ENCODE measurements at regions of chr1 and their contacts with region 1.

Region 1: GRCh38 chr1:167936068-167936929 is at the start of gene DCAF6:
- DNase-seq: peak; percentile 99
- ATAC-seq: peak; percentile 78
- H3K4me3 ChIP-seq: peak within 1 kb of the TSS; percentile 79 to 96 (median 94)
- H3K4me3 Mint-ChIP-seq: peak within 1 kb of the TSS; percentile 95
- H3K27ac ChIP-seq: peak within 1 kb of the TSS; percentile 87 to 95
- H3K27ac Mint-ChIP-seq: peak within 1 kb of the TSS; percentile 100
- H3K4me1 ChIP-seq: peaks cover 10 to 27% of the 10 kb centered on the region in 2 donors
- H3K4me1 Mint-ChIP-seq: peaks cover 35% of the 10 kb centered on the region
- H3K27me3 ChIP-seq: no peaks in the 10 kb centered on the region
- H3K27me3 Mint-ChIP-seq: no peaks in the 10 kb centered on the region
- CTCF ChIP-seq: no peak
- total RNA-seq, gene DCAF6: 40.0 and 40.4 TPM in 2 replicates

Region 2: DNA sequence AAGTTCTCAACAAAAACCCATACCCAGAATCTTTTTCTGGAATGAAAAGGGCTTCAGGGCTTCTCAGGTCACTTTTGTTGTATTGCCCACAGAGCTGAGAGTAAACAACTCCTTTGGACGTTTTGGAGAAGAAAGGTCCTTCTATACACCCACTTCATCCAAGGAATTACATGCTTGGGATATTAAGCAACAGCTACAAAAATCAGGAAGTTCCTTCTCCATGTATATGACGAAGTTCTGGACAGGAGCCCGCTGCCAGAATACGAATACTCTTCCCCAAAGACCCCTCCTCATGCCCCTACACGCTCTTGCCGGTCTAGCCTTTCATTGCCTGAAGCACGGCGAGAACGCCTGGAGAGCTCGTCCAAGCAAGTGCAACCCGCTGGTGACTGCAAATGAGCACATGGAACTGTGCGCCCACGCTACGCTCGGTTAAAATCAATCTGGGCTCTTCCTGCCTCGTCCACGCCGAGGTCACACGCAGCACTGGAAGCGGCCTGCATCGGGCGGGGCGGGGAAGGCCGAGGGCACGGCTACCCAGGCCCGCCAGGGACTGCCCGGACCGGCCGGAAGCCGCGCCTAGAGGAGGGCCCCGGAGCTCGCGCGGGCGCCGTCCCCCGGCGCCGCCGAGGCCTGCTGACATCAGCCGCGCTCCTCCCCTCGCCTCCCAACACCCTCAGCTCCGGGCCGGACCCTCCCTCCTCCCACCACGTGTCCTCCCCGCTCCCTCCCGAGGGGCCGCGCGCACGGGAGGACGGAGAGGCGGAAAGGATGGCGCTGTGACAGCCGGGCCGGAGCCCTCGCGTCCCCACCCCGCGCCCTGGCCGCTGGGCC is 1097.3 kb before region 1 on chr1 and contains the start of gene POGK:
- CTCF ChIA-PET with region 1: no interaction called
- POLR2A ChIA-PET with region 1: no interaction called
- intact Hi-C with region 1: loop called (anchors 2 kb)
- DNase-seq: peak; percentile 89
- ATAC-seq: peak; percentile 93
- H3K4me3 ChIP-seq: peak within 1 kb of the TSS; percentile 71 to 86 (median 71)
- H3K4me3 Mint-ChIP-seq: peak within 1 kb of the TSS; percentile 97
- H3K27ac ChIP-seq: peak within 1 kb of the TSS; percentile 83 to 89
- H3K27ac Mint-ChIP-seq: peak within 1 kb of the TSS; percentile 99
- H3K4me1 ChIP-seq: peaks cover 21 to 25% of the 10 kb centered on the region in 2 donors
- H3K4me1 Mint-ChIP-seq: peaks cover 31% of the 10 kb centered on the region
- H3K27me3 ChIP-seq: peaks cover 0 to 3% (median 0%) of the 10 kb centered on the region in 4 experiments
- H3K27me3 Mint-ChIP-seq: no peaks in the 10 kb centered on the region
- CTCF ChIP-seq: no peak
- total RNA-seq, gene POGK: 40.8 and 45.0 TPM in 2 replicates

Region 3: GRCh38 chr1:167220537-167221125 is 715.7 kb before region 1 on chr1 and contains the start of gene POU2F1:
- CTCF ChIA-PET with region 1: interaction called, 3 read pairs
- POLR2A ChIA-PET with region 1: interaction called, 4 read pairs
- intact Hi-C with region 1: loop called (anchors 1 kb)
- DNase-seq: peak; percentile 100
- ATAC-seq: peak; percentile 72
- H3K4me3 ChIP-seq: peak within 1 kb of the TSS; percentile 70 to 99 (median 88)
- H3K4me3 Mint-ChIP-seq: peak within 1 kb of the TSS; percentile 93
- H3K27ac ChIP-seq: peak within 1 kb of the TSS; percentile 92 to 96
- H3K27ac Mint-ChIP-seq: peak within 1 kb of the TSS; percentile 98
- H3K4me1 ChIP-seq: peaks cover 23 to 26% of the 10 kb centered on the region in 2 donors
- H3K4me1 Mint-ChIP-seq: peaks cover 42% of the 10 kb centered on the region
- H3K27me3 ChIP-seq: no peaks in the 10 kb centered on the region
- H3K27me3 Mint-ChIP-seq: no peaks in the 10 kb centered on the region
- CTCF ChIP-seq: peak; percentile 61
- total RNA-seq, gene POU2F1: 47.4 and 48.8 TPM in 2 replicates

Region 4: GRCh38 chr1:167553136-167554027 is 382.9 kb before region 1 on chr1 and contains the start of gene CREG1:
- CTCF ChIA-PET with region 1: no interaction called
- POLR2A ChIA-PET with region 1: no interaction called
- intact Hi-C with region 1: loop called (anchors 10 kb)
- DNase-seq: peak; percentile 92
- ATAC-seq: peak; percentile 98
- H3K4me3 ChIP-seq: peak within 1 kb of the TSS; percentile 56 to 82 (median 68)
- H3K4me3 Mint-ChIP-seq: peak within 1 kb of the TSS; percentile 96
- H3K27ac ChIP-seq: no peak within 1 kb of the TSS
- H3K27ac Mint-ChIP-seq: peak within 1 kb of the TSS; percentile 82
- H3K4me1 ChIP-seq: peaks cover 10 to 23% of the 10 kb centered on the region in 2 donors
- H3K4me1 Mint-ChIP-seq: peaks cover 23% of the 10 kb centered on the region
- H3K27me3 ChIP-seq: no peaks in the 10 kb centered on the region
- H3K27me3 Mint-ChIP-seq: no peaks in the 10 kb centered on the region
- CTCF ChIP-seq: no peak
- total RNA-seq, gene CREG1: 8.1 and 8.4 TPM in 2 replicates

Region 5: DNA sequence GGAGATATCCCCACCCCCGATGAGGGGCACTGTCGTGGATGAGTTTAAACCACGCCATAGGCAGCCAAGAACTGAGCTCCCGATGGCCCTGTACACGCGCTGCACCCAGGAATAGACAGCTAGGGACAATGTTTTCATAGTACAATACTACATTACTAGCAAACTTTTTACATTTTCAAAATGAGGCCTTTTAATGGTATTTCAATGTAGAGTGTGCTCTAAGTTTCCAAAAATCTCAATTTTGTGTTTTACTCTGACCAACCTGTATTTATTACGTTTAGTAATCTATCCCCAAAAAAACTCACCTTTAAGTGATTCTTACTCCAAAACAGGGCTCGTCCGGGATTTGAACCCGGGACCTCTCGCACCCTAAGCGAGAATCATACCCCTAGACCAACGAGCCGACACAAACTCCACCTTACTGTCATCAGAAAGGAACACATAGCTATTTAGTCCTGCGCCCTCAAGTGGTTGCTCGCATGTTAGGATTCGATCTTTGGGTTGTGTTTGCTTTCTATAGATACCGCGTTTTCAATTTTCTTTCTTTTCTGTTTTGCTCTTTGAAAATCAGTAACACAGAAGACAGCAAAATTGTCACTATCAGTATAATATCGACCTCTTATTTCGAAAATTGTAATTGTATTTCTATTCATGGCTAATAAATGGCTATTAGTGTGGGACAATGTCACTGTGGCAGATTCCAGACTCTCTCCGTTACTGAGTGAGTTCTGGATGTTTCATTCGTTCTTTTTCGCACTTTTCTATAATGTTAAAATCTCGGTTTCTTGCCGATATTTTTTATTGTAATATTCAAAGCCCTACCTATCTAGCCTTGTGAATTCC is 220.9 kb before region 1 on chr1:
- CTCF ChIA-PET with region 1: no interaction called
- POLR2A ChIA-PET with region 1: no interaction called
- intact Hi-C with region 1: loop called (anchors 2 kb)
- DNase-seq: peak; percentile 94
- ATAC-seq: peak; percentile 58
- H3K4me3 ChIP-seq: peak overlapping the region; percentile 80 to 94 (median 91)
- H3K4me3 Mint-ChIP-seq: peak overlapping the region; percentile 93
- H3K27ac ChIP-seq: peak overlapping the region in 1 of 2 donors; percentile 54
- H3K27ac Mint-ChIP-seq: peak overlapping the region; percentile 98
- H3K4me1 ChIP-seq: peaks cover 37 to 41% of the 10 kb centered on the region in 2 donors
- H3K4me1 Mint-ChIP-seq: peaks cover 44% of the 10 kb centered on the region
- H3K27me3 ChIP-seq: no peaks in the 10 kb centered on the region
- H3K27me3 Mint-ChIP-seq: no peaks in the 10 kb centered on the region
- CTCF ChIP-seq: peak; percentile 85

Region 6: GRCh38 chr1:168004531-168004930 is 68.2 kb after region 1 on chr1:
- CTCF ChIA-PET with region 1: no interaction called
- POLR2A ChIA-PET with region 1: no interaction called
- intact Hi-C with region 1: loop called (anchors 10 kb)
- DNase-seq: no peak
- ATAC-seq: no peak
- H3K4me3 ChIP-seq: no peak overlapping the region
- H3K4me3 Mint-ChIP-seq: no peak overlapping the region
- H3K27ac ChIP-seq: no peak overlapping the region
- H3K27ac Mint-ChIP-seq: no peak overlapping the region
- H3K4me1 ChIP-seq: no peaks in the 10 kb centered on the region
- H3K4me1 Mint-ChIP-seq: no peaks in the 10 kb centered on the region
- H3K27me3 ChIP-seq: no peaks in the 10 kb centered on the region
- H3K27me3 Mint-ChIP-seq: no peaks in the 10 kb centered on the region
- CTCF ChIP-seq: no peak

Region 7: DNA sequence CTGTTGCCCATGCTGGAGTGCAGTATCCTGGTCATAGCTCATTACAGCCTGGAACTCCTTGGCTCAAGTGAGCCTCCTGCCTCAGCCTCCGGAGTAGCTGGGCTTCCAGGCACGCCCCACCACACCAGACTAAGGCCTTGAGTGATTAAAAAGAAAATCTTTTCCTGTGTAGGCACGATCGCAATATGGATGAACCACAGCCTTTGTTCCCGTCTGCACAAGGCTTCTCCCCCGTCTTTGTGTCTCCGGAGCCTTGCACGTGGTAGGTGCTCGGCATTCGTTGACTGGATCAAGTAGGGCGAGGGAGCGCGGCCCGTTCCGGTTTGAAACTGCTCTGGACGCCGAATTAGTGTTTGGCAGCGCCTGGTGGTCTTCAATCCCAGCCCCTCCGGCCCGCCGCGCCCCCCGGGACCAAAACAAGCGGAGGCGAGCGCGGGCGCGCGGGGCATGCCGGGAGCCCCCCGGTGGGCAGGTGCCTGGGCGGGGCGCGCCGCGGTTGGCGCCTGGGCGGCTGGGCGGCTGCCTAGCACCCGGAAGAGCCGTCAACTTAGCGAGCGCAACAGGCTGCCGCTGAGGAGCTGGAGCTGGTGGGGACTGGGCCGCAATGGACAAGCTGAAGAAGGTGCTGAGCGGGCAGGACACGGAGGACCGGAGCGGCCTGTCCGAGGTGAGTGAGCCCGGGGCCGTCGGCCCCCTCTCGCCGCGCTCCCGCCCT is 289.3 kb after region 1 on chr1 and contains the start of gene SFT2D2:
- CTCF ChIA-PET with region 1: no interaction called
- POLR2A ChIA-PET with region 1: no interaction called
- intact Hi-C with region 1: loop called (anchors 2 kb)
- DNase-seq: peak; percentile 87
- ATAC-seq: peak; percentile 93
- H3K4me3 ChIP-seq: peak within 1 kb of the TSS; percentile 71 to 89 (median 84)
- H3K4me3 Mint-ChIP-seq: peak within 1 kb of the TSS; percentile 89
- H3K27ac ChIP-seq: peak within 1 kb of the TSS; percentile 73 to 91
- H3K27ac Mint-ChIP-seq: peak within 1 kb of the TSS; percentile 98
- H3K4me1 ChIP-seq: peaks cover 42 to 45% of the 10 kb centered on the region in 2 donors
- H3K4me1 Mint-ChIP-seq: peaks cover 49% of the 10 kb centered on the region
- H3K27me3 ChIP-seq: no peaks in the 10 kb centered on the region
- H3K27me3 Mint-ChIP-seq: peaks cover 2% of the 10 kb centered on the region
- CTCF ChIP-seq: no peak
- total RNA-seq, gene SFT2D2: 68.3 and 79.0 TPM in 2 replicates

Region 8: DNA sequence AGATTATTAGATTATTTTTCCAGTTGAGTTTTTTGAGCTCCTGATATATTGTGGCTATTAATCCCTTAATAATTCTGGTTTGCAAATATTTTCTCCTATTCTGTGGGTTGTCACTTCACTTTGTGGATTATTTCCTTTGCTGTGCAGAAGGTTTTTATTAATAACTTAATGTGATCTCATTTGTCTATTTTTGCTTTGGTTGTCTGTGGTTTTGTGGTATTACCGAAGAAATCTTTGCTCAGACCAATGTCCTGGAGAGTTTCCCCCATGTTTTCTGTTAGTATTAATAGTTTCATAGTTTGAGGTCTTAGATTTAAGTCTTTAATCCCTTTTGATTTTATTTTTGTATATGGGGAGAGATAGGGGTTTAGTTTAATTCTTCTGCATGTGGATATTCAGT is 337.3 kb after region 1 on chr1:
- CTCF ChIA-PET with region 1: no interaction called
- POLR2A ChIA-PET with region 1: no interaction called
- intact Hi-C with region 1: no loop called
- DNase-seq: no peak
- ATAC-seq: no peak
- H3K4me3 ChIP-seq: no peak overlapping the region
- H3K4me3 Mint-ChIP-seq: no peak overlapping the region
- H3K27ac ChIP-seq: no peak overlapping the region
- H3K27ac Mint-ChIP-seq: no peak overlapping the region
- H3K4me1 ChIP-seq: peaks cover 0 to 3% of the 10 kb centered on the region in 2 donors
- H3K4me1 Mint-ChIP-seq: peaks cover 10% of the 10 kb centered on the region
- H3K27me3 ChIP-seq: no peaks in the 10 kb centered on the region
- H3K27me3 Mint-ChIP-seq: no peaks in the 10 kb centered on the region
- CTCF ChIP-seq: no peak